ENCODE measurements at regions of chr17 and their contacts with region 1.

Region 1: GRCh38 chr17:81025741-81026129 is 9.2 kb upstream of the BAIAP2 start:
- DNase-seq: no peak
- H3K4me3 ChIP-seq: no peak overlapping the region
- H3K27me3 ChIP-seq: peaks cover 23% of the 10 kb centered on the region
- CTCF ChIP-seq: no peak

Region 2: DNA sequence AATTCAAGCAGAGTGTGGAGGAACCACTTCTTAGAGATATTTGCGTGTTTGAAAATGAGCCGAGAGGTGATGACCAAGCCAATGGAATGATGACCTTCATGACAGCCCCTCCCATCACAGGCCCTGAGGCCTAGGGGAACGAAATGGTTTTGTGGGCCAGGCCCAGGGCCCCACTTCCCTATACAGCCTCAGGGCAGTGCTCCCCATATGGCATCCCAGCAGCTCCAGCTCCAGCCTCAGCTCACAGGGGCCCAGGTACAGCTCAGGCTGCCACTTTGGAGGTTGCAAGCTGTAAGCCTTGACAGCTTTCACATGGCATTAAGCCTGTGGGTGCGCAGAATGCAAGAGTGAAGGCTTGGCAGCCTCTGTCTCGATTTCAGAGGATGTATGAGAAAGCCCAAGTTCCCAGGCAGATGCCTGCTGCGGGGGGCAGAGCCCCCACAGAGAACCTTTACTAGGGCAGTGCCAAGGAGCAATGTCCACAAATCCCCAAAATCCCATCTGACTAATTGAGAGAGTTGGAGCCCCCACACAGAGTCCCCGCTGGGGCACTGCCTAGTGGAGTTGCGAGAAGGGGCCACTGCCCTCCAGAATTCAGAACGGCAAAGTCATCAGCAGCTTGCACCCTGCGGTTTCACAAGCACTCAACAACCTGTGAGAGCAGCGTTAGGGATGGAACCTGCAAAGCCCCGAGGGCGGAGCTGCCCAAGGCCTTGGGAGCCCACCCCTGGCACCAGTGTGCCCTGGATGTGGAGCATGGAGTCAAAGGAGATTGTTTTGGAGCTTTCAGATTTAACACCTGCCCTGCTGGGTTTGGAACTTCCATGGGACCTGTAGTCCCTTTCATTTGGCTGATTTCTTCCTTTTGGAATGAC is 12.9 kb before region 1 on chr17:
- CTCF ChIA-PET with region 1: interaction called, 24 read pairs
- POLR2A ChIA-PET with region 1: no interaction called
- DNase-seq: no peak
- H3K4me3 ChIP-seq: no peak overlapping the region
- H3K27me3 ChIP-seq: peaks cover 3% of the 10 kb centered on the region
- CTCF ChIP-seq: no peak